ENCODE measurements at regions of chr18 and their contacts with region 1.

Region 1: GRCh38 chr18:22169007-22169864 is at the start of gene GATA6:
- DNase-seq: peak; percentile 89 to 90
- ATAC-seq: peak; percentile 59 to 87 (median 72)
- H3K4me3 ChIP-seq: peak within 1 kb of the TSS; percentile 71 to 97 (median 93)
- H3K27ac ChIP-seq: peak within 1 kb of the TSS; percentile 92 to 100 (median 98)
- H3K4me1 ChIP-seq: peaks cover 0 to 43% (median 29%) of the 10 kb centered on the region in 9 donors
- H3K27me3 ChIP-seq: peaks cover 0 to 96% (median 37%) of the 10 kb centered on the region in 7 donors
- CTCF ChIP-seq: peak in 7 of 9 donors; percentile 25 to 68 (median 53)
- total RNA-seq, gene GATA6: 54.6 to 99.5 (median 73.4) TPM

Region 2: DNA sequence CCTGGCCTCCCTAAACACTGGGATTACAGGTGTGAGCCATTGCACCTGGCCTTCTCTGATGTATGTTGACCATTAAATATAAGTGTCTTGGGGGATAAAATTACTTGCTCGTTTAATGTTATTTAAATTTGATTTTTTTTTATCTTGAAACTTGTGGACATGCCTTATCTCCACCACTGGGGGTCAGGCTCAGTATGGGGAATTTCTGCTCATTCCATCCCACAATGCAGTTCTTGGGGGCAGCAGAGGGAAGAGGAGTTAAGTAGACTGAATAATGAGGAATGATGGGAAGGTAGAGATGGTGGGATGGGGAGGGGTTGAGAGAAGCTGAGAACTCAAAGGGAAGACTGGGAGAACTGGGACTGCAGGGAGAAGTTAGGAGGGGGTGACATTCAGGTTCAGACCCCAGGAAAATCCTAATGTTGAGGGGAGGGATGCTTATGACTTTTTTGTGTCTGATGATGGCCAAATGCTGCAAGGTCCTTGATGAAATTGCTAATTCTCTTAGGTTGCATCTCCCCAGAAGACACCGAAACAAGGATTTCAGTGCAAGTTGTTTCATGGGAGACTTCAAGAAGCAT is 254.4 kb before region 1 on chr18:
- intact Hi-C with region 1: loop called in 4 of 10 experiments (anchors 5 to 10 kb)
- DNase-seq: peak in 1 of 2 donors; percentile 13
- ATAC-seq: peak in 7 of 8 donors; percentile 55 to 79 (median 65)
- H3K4me3 ChIP-seq: no peak overlapping the region
- H3K27ac ChIP-seq: no peak overlapping the region
- H3K4me1 ChIP-seq: no peaks in the 10 kb centered on the region
- H3K27me3 ChIP-seq: no peaks in the 10 kb centered on the region
- CTCF ChIP-seq: peak in 8 of 9 donors; percentile 20 to 67 (median 56)

Region 3: GRCh38 chr18:22084547-22084946 is 84.7 kb before region 1 on chr18:
- intact Hi-C with region 1: loop called in 2 of 10 experiments (anchors 5 kb)
- DNase-seq: peak in 1 of 2 donors; percentile 71
- ATAC-seq: peak; percentile 51 to 88 (median 82)
- H3K4me3 ChIP-seq: no peak overlapping the region
- H3K27ac ChIP-seq: peak overlapping the region in 6 of 10 donors; percentile 23 to 83 (median 80)
- H3K4me1 ChIP-seq: peaks cover 0 to 27% (median 9%) of the 10 kb centered on the region in 9 donors
- H3K27me3 ChIP-seq: no peaks in the 10 kb centered on the region
- CTCF ChIP-seq: no peak

Region 4: GRCh38 chr18:22214731-22215528 is 45.7 kb after region 1 on chr18:
- intact Hi-C with region 1: loop called in 1 of 10 experiments (anchors 5 kb)
- DNase-seq: no peak
- ATAC-seq: peak in 5 of 8 donors; percentile 15 to 59 (median 36)
- H3K4me3 ChIP-seq: no peak overlapping the region
- H3K27ac ChIP-seq: peak overlapping the region in 2 of 10 donors; percentile 13 to 26
- H3K4me1 ChIP-seq: peaks cover 0 to 56% (median 33%) of the 10 kb centered on the region in 9 donors
- H3K27me3 ChIP-seq: no peaks in the 10 kb centered on the region
- CTCF ChIP-seq: no peak

Region 5: DNA sequence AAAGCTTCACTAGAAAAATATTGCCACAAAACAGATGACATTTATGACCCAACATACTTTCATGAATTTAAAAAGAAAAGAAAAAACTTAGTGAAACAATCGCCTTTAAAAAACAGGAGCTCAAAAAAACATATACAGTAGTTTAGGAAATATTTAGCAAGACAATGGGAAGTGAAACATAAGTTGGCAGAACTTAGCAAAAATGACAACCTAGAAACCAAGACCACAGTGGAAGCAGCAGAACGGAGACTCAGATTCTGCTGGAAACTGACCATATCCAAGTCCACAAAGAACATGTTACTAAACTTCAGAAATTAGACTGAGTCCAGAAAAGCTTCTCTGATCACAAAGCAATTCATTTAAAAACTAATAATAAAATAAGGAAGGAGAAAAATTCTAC is 290.3 kb after region 1 on chr18:
- intact Hi-C with region 1: loop called in 1 of 10 experiments (anchors 5 kb)
- DNase-seq: no peak
- ATAC-seq: no peak
- H3K4me3 ChIP-seq: no peak overlapping the region
- H3K27ac ChIP-seq: no peak overlapping the region
- H3K4me1 ChIP-seq: peaks cover 0 to 32% (median 12%) of the 10 kb centered on the region in 9 donors
- H3K27me3 ChIP-seq: no peaks in the 10 kb centered on the region
- CTCF ChIP-seq: no peak

Region 6: DNA sequence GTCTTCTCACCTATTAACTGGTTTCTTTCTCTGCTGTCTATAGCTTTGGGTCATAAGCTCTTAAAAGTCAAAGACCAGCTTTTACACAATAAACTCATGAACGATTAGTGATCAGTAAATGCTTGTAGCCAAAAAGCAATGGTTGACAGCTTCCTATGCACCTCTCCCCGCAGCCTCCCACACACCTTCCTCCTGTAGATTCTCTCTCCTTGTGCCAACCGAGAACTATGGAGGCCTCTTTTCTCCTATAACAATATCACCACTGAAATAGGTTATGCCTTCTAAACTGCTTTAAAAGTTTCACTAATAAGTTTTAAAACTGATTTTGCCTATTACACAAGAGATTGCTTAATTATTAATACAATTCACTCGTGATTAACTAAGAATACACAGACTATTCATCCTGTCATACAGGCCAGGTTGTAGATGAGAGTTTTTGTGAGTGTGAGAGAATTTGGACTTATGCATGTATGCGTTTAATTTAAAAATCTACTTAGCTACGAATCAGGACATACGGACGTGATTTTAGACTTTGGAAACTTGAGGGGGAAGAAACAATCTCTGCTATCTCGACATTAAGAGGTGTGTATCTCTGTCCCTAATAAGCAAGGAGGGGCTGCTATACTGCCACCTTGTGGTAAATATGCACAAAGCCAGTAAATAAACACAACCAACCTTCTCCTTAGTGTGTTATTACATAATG is 534.8 kb after region 1 on chr18:
- intact Hi-C with region 1: loop called in 2 of 10 experiments (anchors 10 kb)
- DNase-seq: peak in 1 of 2 donors; percentile 29
- ATAC-seq: peak in 7 of 8 donors; percentile 67 to 85 (median 78)
- H3K4me3 ChIP-seq: no peak overlapping the region
- H3K27ac ChIP-seq: no peak overlapping the region
- H3K4me1 ChIP-seq: peaks cover 0 to 28% (median 3%) of the 10 kb centered on the region in 9 donors
- H3K27me3 ChIP-seq: no peaks in the 10 kb centered on the region
- CTCF ChIP-seq: peak; percentile 71 to 91 (median 85)